Activated CD4-positive, alpha-beta T cell treated with anti-CD3 and anti-CD28 coated beads for 36 hours (primary cell): ENCODE measurements at regions of chr1 and their contacts with region 1.

Region 1: GRCh38 chr1:55277377-55278130 is 62.4 kb upstream of the USP24 start:
- DNase-seq: peak; percentile 92
- ATAC-seq: peak; percentile 91
- H3K4me3 Mint-ChIP-seq: peak overlapping the region; percentile 0
- H3K27ac Mint-ChIP-seq: peak overlapping the region; percentile 58
- H3K4me1 Mint-ChIP-seq: peaks cover 23% of the 10 kb centered on the region
- H3K27me3 Mint-ChIP-seq: peaks cover 4% of the 10 kb centered on the region

Region 2: GRCh38 chr1:55021965-55022546 is 255.5 kb before region 1 on chr1:
- CTCF ChIA-PET with region 1: no interaction called
- POLR2A ChIA-PET with region 1: no interaction called
- intact Hi-C with region 1: loop called in 1 of 2 experiments (anchors 2 kb)
- DNase-seq: peak; percentile 88
- ATAC-seq: peak; percentile 99
- H3K4me3 Mint-ChIP-seq: no peak overlapping the region
- H3K27ac Mint-ChIP-seq: no peak overlapping the region
- H3K4me1 Mint-ChIP-seq: no peaks in the 10 kb centered on the region
- H3K27me3 Mint-ChIP-seq: peaks cover 3% of the 10 kb centered on the region

Region 3: GRCh38 chr1:55073187-55073916 is 204.2 kb before region 1 on chr1:
- CTCF ChIA-PET with region 1: no interaction called
- POLR2A ChIA-PET with region 1: no interaction called
- intact Hi-C with region 1: loop called (anchors 1 kb)
- DNase-seq: peak; percentile 61
- ATAC-seq: peak; percentile 98
- H3K4me3 Mint-ChIP-seq: no peak overlapping the region
- H3K27ac Mint-ChIP-seq: peak overlapping the region; percentile 83
- H3K4me1 Mint-ChIP-seq: peaks cover 18% of the 10 kb centered on the region
- H3K27me3 Mint-ChIP-seq: no peaks in the 10 kb centered on the region

Region 4: DNA sequence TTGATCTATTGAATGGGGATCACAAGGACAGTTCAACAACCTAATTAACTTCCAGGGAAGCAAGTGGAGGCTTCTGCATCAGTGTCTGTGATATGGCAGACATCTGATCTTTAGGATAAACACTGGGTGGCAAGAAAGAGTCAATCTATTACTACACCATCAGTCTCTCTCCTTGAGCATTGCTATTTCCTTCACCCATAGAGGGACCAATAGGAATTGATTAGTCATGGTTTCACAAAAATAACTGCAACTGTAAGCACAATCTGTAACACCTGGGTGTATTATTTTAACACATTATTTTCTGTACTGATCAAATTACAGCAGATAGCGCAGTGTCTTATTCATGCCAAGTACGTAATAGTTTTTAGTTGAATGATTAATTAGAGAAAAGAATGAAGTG is 112.6 kb before region 1 on chr1:
- CTCF ChIA-PET with region 1: interaction called, 10 read pairs
- POLR2A ChIA-PET with region 1: no interaction called
- intact Hi-C with region 1: no loop called
- DNase-seq: no peak
- ATAC-seq: peak; percentile 87
- H3K4me3 Mint-ChIP-seq: no peak overlapping the region
- H3K27ac Mint-ChIP-seq: peak overlapping the region; percentile 70
- H3K4me1 Mint-ChIP-seq: peaks cover 41% of the 10 kb centered on the region
- H3K27me3 Mint-ChIP-seq: no peaks in the 10 kb centered on the region

Region 5: GRCh38 chr1:55215256-55216021 is 62.1 kb before region 1 on chr1 and contains the start of gene USP24:
- CTCF ChIA-PET with region 1: interaction called, 4 read pairs
- POLR2A ChIA-PET with region 1: no interaction called
- intact Hi-C with region 1: loop called (anchors 1 to 2 kb)
- DNase-seq: peak; percentile 90
- ATAC-seq: peak; percentile 84
- H3K4me3 Mint-ChIP-seq: peak within 1 kb of the TSS; percentile 97
- H3K27ac Mint-ChIP-seq: peak within 1 kb of the TSS; percentile 100
- H3K4me1 Mint-ChIP-seq: peaks cover 55% of the 10 kb centered on the region
- H3K27me3 Mint-ChIP-seq: no peaks in the 10 kb centered on the region
- total RNA-seq, gene USP24: 37.0 to 39.7 TPM